Activated CD4-positive, alpha-beta memory T cell treated with anti-CD3 and anti-CD28 coated beads for 36 hours (primary cell): ENCODE measurements at regions of chr10 and their contacts with region 1.

Region 1: DNA sequence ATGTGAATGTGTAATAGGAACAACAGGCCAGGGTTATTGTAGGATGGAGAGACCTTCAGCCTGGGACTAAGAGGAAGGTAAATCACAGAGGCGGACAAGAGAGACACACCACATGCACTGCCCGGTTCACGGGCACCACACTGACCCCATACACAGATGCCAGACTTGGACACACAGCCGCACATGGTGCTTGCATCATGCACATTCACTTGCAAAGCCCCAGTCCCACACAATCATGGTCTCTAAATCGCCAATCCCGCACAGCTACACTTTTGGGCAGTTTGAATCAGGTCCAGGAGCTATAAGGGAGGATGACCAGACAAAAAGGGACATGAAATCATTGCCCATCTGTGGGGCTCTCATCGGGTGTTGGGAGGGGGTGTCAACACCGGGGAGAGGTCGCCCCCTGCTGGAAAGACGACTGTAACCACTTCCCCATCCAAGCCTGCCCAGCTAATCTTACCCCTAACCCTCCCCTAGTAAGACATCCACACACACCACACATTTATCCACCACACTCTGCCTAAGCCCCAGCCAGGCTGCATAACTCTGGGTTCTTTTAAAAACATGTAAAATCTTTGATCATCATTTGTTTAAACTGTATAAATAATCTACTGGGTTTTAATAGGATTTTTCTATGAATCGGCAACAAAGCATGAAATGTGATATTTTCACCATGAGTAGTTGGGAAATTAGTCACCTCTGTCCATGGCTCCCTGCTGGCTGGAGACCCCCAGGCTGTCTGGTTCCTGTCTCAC is 40.5 kb upstream of the SLF2 start:
- DNase-seq: peak; percentile 82
- H3K4me3 Mint-ChIP-seq: no peak overlapping the region
- H3K27ac Mint-ChIP-seq: no peak overlapping the region
- H3K4me1 Mint-ChIP-seq: no peaks in the 10 kb centered on the region
- H3K27me3 Mint-ChIP-seq: peaks cover 16% of the 10 kb centered on the region

Region 2: DNA sequence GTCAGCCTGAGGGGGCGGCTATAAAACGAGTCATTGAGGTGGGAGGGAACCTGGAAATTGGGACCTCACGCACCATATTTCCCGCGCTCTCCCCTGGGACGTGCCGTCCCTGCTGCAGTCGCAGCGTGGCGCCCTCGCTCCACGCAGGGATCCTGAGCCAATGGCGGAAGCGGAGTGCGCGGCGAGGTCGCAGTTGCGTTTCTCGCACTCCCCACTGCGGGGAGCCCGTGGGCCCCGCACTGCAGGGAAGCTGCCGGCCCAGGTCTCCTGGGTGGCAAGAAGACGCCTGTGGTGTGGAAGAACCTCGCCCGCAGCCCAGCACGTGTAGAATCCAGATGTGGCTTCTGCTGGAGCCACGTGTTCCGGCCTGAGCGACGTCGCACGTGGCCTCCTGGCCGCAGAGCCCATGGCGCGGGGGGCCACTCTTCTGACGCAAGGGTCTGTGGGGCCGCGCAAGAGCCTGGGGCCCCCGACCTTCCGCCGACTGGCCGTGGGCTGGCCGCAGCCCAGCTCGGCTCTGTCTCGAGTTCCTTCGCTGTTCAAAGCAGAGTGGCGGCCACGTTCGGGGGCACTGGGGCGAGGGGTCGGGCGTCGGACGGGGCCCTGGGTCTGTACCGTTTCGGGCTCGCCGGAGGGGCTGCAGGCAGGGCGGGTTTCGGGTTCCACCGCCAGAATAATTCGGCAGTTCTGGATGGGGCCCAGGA is 310.1 kb before region 1 on chr10:
- CTCF ChIA-PET with region 1: interaction called, 40 read pairs
- POLR2A ChIA-PET with region 1: no interaction called
- intact Hi-C with region 1: loop called (anchors 2 kb)
- DNase-seq: peak; percentile 86
- H3K4me3 Mint-ChIP-seq: no peak overlapping the region
- H3K27ac Mint-ChIP-seq: no peak overlapping the region
- H3K4me1 Mint-ChIP-seq: peaks cover 10% of the 10 kb centered on the region
- H3K27me3 Mint-ChIP-seq: peaks cover 29% of the 10 kb centered on the region

Region 3: DNA sequence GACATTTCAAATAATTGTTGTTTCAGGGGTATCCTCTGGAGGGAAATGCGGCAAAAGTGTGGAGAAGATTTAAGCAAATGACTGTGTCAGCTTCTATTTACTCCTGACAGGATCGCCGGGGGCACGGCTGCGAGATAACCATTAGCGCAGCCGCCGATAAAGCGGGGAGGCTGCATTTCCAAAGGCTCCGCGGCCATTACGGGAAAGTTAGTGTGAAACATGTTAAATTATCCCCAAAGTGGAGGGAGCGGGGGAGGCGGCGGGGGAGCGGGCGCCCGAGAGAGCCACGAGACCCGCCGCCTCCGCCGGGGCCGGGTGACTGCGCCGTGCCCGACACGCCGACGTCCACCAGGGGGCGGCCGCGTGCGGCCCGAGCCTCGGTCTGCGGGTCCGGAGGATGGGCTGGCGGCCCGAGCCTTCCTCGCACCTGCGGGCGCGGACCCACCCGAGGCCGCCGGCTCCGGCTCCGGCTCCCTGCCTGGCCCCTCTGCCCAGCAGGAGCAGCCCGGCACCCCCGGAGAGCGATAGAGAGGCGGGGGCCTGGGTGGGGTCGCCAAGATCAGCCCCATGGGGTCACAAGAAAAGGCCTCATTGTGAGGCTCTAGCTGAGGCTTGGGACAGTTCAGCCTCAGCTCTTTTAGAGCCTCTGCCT is 201.3 kb before region 1 on chr10:
- CTCF ChIA-PET with region 1: interaction called, 21 read pairs
- POLR2A ChIA-PET with region 1: no interaction called
- intact Hi-C with region 1: loop called (anchors 2 kb)
- DNase-seq: peak; percentile 75
- H3K4me3 Mint-ChIP-seq: no peak overlapping the region
- H3K27ac Mint-ChIP-seq: no peak overlapping the region
- H3K4me1 Mint-ChIP-seq: peaks cover 3% of the 10 kb centered on the region
- H3K27me3 Mint-ChIP-seq: peaks cover 56% of the 10 kb centered on the region

Region 4: DNA sequence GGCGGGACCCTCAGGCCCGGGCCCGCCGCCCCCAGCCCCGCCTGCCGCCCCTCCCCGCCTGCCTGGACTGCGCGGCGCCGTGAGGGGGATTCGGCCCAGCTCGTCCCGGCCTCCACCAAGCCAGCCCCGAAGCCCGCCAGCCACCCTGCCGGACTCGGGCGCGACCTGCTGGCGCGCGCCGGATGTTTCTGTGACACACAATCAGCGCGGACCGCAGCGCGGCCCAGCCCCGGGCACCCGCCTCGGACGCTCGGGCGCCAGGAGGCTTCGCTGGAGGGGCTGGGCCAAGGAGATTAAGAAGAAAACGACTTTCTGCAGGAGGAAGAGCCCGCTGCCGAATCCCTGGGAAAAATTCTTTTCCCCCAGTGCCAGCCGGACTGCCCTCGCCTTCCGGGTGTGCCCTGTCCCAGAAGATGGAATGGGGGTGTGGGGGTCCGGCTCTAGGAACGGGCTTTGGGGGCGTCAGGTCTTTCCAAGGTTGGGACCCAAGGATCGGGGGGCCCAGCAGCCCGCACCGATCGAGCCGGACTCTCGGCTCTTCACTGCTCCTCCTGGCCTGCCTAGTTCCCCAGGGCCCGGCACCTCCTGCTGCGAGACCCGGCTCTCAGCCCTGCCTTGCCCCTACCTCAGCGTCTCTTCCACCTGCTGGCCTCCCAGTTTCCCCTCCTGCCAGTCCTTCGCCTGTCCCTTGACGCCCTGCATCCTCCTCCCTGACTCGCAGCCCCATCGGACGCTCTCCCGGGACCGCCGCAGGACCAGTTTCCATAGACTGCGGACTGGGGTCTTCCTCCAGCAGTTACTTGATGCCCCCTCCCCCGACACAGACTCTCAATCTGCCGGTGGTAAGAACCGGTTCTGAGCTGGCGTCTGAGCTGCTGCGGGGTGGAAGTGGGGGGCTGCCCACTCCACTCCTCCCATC is 44.1 kb before region 1 on chr10:
- CTCF ChIA-PET with region 1: interaction called, 7 read pairs
- POLR2A ChIA-PET with region 1: no interaction called
- intact Hi-C with region 1: loop called (anchors 2 kb)
- DNase-seq: peak; percentile 57
- H3K4me3 Mint-ChIP-seq: peak overlapping the region; percentile 67
- H3K27ac Mint-ChIP-seq: no peak overlapping the region
- H3K4me1 Mint-ChIP-seq: peaks cover 21% of the 10 kb centered on the region
- H3K27me3 Mint-ChIP-seq: peaks cover 72% of the 10 kb centered on the region

Region 5: DNA sequence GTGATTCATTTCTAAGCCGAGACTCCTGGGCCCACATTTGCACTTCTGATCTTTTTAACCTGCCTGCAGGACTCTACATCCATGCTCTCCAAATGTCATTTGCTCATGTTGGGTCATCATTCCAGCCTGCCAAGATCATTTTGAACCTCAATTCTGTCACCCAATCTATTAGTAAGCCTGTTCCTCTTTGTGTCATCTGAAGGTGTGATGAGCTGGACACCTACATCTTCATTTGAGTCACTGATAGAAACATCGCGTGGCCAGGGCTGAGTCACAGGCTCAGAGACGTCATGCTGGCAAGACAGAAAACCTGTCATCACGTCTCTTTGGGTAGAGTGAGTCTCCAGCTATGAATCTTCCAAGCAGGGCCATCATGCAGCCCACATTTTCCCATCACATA is 24.8 kb before region 1 on chr10:
- CTCF ChIA-PET with region 1: interaction called, 11 read pairs
- POLR2A ChIA-PET with region 1: no interaction called
- intact Hi-C with region 1: no loop called
- DNase-seq: peak; percentile 94
- H3K4me3 Mint-ChIP-seq: peak overlapping the region; percentile 18
- H3K27ac Mint-ChIP-seq: peak overlapping the region; percentile 86
- H3K4me1 Mint-ChIP-seq: peaks cover 28% of the 10 kb centered on the region
- H3K27me3 Mint-ChIP-seq: peaks cover 48% of the 10 kb centered on the region

Region 6: GRCh38 chr10:100888796-100889356 is 16.7 kb after region 1 on chr10:
- CTCF ChIA-PET with region 1: interaction called, 13 read pairs
- POLR2A ChIA-PET with region 1: no interaction called
- intact Hi-C with region 1: no loop called
- DNase-seq: no peak
- H3K4me3 Mint-ChIP-seq: no peak overlapping the region
- H3K27ac Mint-ChIP-seq: no peak overlapping the region
- H3K4me1 Mint-ChIP-seq: no peaks in the 10 kb centered on the region
- H3K27me3 Mint-ChIP-seq: peaks cover 15% of the 10 kb centered on the region